HEK293T (cell line): ENCODE measurements at regions of chrX and their contacts with region 1.

Region 1: GRCh38 chrX:40153335-40154249 is 55.8 kb upstream of the BCOR start:
- DNase-seq: no peak

Region 2: GRCh38 chrX:40108959-40109287 is 44.7 kb before region 1 on chrX:
- CTCF ChIA-PET with region 1: interaction called, 4 read pairs
- POLR2A ChIA-PET with region 1: interaction called, 31 read pairs
- DNase-seq: peak; percentile 64

Region 3: DNA sequence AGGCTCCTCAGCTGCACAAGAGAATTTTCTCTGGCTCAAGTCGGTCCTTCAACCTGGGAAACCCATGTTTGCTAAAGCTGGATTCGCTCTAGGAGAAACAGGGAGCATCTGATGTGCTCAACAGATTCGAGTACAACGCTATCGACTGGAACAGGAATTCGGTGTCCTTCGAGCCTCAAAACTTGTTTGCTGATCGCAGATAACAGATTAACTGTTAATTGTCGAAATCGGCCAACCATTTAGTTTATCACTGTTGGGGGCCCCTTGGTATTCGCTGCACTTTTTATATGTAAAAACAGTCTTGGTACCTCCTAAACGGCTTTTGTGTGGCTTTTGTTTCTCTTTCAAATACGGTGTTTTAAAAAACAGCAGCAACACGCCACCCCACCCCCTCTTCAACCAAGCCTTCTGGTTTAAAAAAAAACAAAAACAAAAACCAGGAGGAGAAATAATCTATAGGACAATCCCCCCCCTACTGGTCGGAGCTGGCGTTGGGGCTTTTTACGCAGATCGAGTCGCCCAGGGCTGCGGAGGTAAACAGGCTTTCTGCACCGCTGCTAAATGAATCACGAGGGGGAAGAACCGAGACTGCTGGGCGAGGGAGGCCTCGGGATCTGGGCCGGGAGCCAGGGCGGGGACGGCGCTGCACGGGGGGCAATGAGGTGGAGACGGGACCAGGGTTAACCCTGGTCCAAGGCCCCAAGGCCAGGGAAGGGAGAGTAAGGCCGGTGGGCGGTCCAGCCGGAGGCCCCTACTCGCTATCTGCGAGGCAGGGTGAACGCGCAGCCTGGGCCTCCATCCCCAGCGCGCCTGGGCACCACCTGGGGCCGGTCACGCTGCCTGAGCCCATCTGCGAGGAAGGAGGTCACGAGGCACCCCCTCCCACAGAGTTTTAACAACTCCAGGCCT is 15.9 kb after region 1 on chrX:
- CTCF ChIA-PET with region 1: interaction called, 7 read pairs
- POLR2A ChIA-PET with region 1: interaction called, 21 read pairs
- DNase-seq: no peak